GM13977 (cell line): ENCODE measurements at regions of chr17 and their contacts with region 1.

Region 1: DNA sequence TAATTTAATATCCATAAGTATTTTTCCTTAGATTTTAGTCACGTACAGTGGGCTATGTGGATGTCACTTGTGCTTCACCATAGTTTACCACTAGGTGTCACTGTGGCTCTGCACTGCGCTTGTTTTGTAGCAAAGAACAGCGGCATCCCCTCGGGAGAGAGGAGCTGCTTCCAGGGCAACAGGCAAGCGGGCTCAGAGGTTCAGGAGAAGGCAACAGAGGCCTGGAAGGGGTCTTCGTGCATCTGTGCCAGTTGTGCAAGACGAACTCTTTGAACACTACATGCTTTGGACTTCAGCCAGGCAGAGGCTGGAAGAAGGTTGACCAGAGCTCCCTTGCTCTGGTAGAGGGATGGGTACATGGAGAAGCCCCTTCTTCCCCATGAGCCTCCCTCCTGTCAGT is 20.6 kb downstream of the CYB561 start:
- DNase-seq: peak; percentile 83
- CTCF ChIP-seq: peak; percentile 87

Region 2: DNA sequence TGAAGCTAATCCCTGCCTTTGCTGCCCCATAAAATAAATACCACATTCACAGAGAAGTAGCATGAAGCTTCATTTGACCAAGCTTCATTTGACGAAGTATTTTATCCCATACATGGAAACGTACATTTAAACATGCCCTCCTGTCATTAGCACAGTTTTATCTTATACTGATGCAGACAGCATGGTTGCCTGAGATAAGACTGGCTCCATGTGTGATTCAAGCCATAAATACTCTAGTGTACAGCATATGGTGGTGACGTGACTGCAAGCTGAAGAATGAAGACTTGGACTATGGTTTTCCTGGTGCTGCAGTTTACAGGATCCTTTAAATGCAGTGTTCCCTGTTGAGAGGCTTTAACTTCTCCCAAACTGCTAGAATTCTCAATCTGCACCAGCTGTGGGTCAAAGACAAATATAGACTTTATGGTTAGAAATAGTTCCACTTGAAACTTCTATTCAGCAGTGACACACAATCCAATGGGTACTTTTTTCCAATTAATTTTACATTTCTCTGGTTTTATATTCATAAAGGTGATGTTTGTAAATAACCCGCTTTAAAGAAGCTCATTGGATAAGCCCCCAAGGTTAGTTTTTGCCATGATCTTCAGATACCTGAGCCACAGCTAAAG is 44.3 kb before region 1 on chr17:
- in situ Hi-C with region 1: no loop called
- DNase-seq: no peak
- CTCF ChIP-seq: no peak

Region 3: DNA sequence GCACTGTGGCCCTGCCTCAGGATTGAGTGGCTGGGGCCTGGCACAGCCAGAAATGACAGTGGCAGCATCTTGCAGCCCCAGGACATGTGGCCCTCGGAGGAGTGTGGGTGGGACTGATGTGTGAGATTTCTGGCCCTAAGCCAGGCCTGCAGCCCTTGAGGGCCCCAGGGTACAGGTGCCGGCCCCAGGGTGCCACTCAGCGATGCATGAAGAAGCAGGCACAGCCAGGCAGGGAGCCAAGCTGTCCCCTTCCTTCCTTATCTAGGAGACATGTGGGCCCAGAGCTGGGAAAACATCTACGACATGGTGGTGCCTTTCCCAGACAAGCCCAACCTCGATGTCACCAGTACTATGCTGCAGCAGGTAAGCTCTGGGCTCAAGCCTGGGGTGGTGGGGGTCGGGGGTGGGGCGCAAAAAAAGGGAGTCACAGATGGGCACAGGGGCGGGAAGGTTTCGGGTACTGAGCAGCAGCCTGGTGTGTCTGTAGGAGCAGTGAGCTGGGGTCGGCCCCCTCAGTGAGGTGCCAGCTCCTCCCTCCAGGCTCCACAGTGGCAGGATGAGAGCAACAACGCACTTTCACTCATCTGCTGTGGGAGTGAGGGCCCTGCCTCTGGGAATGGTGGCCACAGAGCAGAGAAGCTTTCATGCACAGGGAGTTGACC is 55.5 kb after region 1 on chr17:
- in situ Hi-C with region 1: loop called (anchors 10 kb)
- DNase-seq: no peak
- CTCF ChIP-seq: no peak